Aorta (tissue), 5 donors: ENCODE measurements at regions of chr19 and their contacts with region 1.

Region 1: DNA sequence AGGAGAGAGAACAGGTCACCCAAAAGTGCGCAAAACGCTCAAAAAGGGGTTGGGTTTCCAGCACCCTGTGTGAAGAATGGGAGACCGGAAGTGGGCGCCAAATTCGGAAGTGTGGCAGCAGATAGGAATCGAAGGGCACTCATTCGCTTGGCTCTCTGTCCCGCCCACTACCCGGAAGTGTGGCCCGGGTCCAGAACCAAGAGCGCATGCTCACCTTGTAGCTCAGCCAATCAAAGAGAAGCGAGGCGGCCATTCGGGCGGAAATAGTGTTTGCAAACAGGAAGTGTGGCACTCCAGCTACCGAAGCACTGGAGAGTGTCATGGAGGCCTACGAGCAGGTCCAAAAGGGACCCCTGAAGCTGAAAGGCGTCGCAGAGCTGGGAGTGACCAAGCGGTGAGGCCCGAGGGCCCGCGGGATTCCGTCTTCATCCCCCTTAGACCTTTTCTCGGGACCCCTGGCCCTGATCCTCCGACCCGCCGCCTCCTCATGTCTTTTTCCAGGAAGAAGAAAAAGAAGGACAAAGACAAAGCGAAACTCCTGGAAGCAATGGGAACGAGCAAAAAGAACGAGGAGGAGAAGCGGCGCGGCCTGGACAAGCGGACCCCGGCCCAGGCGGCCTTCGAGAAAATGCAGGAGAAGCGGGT is at the start of gene FAM32A:
- DNase-seq: peak; percentile 99
- ATAC-seq: peak; percentile 98
- H3K4me3 ChIP-seq: peak within 1 kb of the TSS; percentile 76 to 99
- H3K27ac ChIP-seq: peak within 1 kb of the TSS in 1 of 2 donors; percentile 11
- H3K4me1 ChIP-seq: no peaks in the 10 kb centered on the region
- H3K27me3 ChIP-seq: no peaks in the 10 kb centered on the region
- total RNA-seq, gene FAM32A: 46.1 to 46.4 TPM

Region 2: GRCh38 chr19:15629003-15629880 is 556.0 kb before region 1 on chr19:
- intact Hi-C with region 1: loop called (anchors 2 to 5 kb)
- DNase-seq: peak; percentile 83 to 94
- ATAC-seq: peak; percentile 88
- H3K4me3 ChIP-seq: no peak overlapping the region
- H3K27ac ChIP-seq: no peak overlapping the region
- H3K4me1 ChIP-seq: no peaks in the 10 kb centered on the region
- H3K27me3 ChIP-seq: no peaks in the 10 kb centered on the region

Region 3: DNA sequence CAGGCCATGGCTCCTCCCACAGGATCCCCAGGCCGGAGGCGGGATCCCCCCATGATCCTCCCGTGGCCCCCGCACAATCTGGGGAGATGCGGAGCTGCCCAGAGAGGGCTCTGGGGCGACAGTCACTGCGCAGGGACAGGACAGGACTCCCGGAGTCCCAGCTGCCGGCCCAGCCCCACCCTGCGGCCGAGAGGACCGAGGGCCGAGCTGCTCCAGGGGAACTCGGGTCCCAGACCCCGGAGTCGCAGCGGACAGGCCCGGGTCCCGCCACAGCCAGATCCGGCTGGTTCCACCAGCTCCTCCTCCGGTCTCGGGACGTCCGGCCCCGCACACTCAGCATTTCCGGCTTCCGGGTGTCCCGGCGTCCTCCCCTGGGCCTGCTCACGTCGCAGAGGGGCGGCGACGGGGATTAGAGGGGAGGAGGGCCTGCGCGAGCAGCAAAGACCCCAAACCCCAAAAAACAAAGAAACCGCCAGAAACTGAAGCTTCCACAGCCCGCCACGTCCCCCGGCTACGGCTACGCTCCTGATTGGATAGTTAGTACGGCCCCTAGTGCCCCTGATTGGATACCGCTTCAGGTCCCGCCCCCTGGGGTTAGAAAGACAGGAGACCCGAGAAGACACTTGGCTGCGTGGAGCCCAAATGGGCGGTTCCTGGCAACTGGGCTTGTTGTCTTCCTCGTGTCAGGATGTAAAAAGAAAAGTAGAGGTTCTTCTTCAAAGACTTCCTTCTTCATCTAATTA is 348.5 kb before region 1 on chr19:
- intact Hi-C with region 1: loop called in 1 of 2 experiments (anchors 2 kb)
- DNase-seq: peak; percentile 97 to 98
- ATAC-seq: peak; percentile 99
- H3K4me3 ChIP-seq: peak overlapping the region; percentile 39 to 42
- H3K27ac ChIP-seq: peak overlapping the region; percentile 57 to 84
- H3K4me1 ChIP-seq: no peaks in the 10 kb centered on the region
- H3K27me3 ChIP-seq: no peaks in the 10 kb centered on the region

Region 4: GRCh38 chr19:16041299-16041990 is 143.8 kb before region 1 on chr19:
- intact Hi-C with region 1: loop called (anchors 1 to 2 kb)
- DNase-seq: peak; percentile 88 to 97
- ATAC-seq: peak; percentile 93
- H3K4me3 ChIP-seq: no peak overlapping the region
- H3K27ac ChIP-seq: peak overlapping the region in 1 of 2 donors; percentile 14
- H3K4me1 ChIP-seq: no peaks in the 10 kb centered on the region
- H3K27me3 ChIP-seq: no peaks in the 10 kb centered on the region

Region 5: DNA sequence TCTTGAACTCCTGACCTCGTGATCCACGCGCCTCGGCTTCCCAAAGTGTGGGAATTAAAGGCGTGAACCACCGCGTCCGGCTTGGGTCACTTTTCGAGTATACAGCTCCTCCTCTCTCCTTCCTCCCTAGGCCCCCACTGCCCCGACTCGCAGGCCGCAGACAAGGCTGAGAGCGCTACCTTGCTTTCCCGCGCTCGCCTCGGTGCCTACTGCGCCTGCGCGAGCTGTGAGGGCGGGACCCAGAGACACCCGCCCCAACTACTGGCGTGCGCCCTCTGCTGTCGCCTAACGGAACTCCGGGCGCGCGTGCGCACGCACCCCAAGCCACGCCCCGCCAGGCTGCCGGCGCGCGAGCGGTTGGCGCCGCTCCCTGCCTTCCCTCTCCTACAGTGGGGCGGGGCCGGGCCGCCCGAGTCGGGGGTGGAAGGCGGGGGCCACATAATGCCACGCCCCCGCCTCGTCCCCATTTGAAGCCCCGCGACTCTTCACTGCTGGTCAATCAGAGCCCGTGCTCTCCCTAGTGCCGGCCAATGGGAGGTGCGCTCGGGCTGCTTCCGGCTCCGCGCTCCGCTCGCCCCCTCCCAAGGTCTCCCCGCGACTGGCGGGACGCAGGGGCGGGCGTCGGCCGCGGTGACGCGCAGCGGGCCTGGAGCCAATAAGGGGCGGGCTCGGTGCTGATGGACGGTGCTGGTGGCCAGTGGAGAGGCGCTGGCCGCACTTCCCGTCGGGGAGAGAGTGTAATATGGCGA is 73.9 kb before region 1 on chr19 and contains the start of gene RAB8A:
- intact Hi-C with region 1: loop called (anchors 5 to 10 kb)
- DNase-seq: peak; percentile 99 to 100
- ATAC-seq: peak; percentile 98
- H3K4me3 ChIP-seq: peak within 1 kb of the TSS; percentile 48 to 94
- H3K27ac ChIP-seq: peak within 1 kb of the TSS in 1 of 2 donors; percentile 35
- H3K4me1 ChIP-seq: peaks cover 0 to 1% of the 10 kb centered on the region in 2 donors
- H3K27me3 ChIP-seq: no peaks in the 10 kb centered on the region
- total RNA-seq, gene RAB8A: 51.3 to 56.7 TPM

Region 6: DNA sequence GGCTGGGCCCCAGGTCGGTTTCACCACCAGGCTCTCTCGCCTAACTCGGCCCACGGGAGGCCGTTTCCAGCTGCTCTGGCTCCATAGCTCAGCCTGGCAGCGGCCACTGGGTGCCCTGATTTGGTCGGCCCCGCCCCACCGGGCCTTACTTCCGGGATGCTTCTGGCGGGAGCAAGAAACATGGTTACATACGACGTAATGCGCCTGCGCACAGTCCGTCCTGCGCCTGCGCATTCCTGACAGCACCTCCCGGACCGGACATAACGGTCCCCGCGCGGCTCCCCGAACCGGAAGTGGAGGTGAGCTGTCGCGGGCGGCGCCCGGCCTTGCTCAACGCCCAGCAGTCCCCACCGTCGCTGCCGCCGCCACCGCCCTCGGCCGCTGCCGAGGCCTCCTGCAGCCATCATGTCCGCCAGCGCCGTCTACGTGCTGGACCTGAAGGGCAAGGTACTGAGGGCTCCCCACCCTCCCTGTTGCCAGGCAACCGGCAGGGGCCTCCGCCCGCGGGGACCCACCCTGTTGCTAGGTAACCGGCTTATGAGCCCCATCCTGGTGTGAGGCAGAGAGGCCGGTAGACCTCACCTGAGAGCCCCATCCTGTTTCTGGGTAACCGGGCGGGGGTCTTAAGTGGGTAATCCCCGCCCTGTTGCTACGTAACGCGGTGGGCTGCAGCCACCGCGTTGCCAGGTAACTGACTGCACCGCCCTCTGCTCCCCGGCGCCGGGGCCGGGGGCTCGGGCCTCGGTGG is 12.6 kb after region 1 on chr19 and contains the start of gene AP1M1:
- intact Hi-C with region 1: loop called in 1 of 2 experiments (anchors 1 kb)
- DNase-seq: peak; percentile 99 to 100
- ATAC-seq: peak; percentile 95
- H3K4me3 ChIP-seq: peak within 1 kb of the TSS; percentile 55 to 90
- H3K27ac ChIP-seq: peak within 1 kb of the TSS in 1 of 2 donors; percentile 88
- H3K4me1 ChIP-seq: no peaks in the 10 kb centered on the region
- H3K27me3 ChIP-seq: no peaks in the 10 kb centered on the region
- total RNA-seq, gene AP1M1: 74.7 TPM

Region 7: DNA sequence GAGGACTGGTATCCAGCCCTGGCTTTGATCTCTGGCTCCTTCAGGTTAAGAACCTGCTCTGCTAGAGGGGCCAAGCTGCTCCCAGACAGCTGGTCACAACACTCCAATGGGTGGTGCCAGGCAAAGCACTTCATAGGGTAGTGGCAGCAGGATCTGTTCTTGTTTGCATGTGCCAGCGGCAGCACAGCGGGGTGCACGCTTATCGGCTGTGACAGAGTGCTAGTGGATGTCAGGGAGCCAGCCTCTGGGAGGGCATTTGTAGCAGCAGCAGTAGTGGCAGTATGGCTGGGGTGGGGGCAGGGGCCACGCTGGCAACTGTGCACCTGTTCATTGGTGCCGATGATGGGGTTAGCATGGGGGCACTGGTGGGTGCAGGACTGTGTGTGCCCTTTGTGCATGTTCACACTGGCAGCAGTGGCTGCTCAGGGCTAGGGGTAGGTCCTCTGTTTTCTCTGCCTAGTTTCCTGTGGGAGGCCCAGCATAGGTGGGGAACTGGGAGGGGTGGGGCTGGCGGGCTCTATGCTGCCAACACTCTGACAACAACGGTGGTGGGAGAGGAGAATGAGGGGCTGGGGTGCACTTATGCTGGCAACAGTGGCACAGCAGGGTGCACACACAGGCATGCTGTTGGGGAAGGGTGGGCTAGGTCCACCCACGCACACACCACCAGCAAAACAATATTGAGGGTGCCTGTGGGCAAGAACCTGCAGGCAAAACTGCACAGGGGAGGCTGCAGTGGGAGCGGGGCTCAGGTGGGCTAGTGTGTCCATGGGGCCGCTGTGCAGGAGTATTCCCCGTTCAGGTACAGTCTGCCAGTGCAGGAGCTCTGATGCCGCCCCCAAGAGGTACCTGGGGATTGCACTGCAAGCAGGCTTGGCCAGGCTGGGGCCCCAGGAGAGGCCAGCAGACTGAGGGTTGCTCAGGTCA is 31.8 kb after region 1 on chr19:
- intact Hi-C with region 1: no loop called
- DNase-seq: peak in 1 of 2 donors; percentile 61
- ATAC-seq: no peak
- H3K4me3 ChIP-seq: no peak overlapping the region
- H3K27ac ChIP-seq: no peak overlapping the region
- H3K4me1 ChIP-seq: no peaks in the 10 kb centered on the region
- H3K27me3 ChIP-seq: no peaks in the 10 kb centered on the region

Region 8: DNA sequence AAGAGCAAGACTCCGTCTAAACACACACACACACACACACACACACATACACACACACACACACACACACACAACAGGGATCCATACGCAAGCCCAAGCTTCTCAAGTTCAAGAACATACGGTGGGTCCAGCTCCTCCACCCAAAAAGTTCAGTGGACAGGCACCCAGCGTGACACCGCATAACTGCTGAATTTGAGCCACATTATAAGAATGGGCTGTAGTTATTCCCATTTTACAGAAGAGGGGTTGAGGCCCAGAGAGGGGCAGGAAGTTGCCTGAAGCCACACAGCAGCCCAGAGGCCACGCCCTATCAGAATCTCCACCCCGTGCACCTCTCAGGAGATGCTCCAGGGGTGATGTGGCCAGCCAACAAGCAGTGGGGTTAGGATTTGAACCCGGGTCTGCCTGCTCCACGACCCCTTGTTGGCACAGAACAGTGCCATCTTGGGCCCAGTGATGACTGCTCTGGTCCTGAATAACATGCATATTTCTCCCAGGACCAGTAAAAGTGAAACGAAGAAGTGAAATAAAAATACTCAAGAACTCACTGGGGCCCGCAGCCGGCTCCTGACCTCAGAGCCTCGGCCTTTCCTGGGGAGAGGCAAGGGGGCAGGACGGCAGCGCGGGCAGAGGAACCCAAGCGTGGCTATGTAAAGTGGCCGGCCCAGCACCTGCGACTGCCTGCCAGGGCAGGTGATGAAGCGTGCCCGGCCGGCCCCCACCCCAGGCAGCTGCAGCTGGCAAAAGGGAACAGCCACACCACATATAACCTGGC is 74.3 kb after region 1 on chr19:
- intact Hi-C with region 1: no loop called
- DNase-seq: no peak
- ATAC-seq: no peak
- H3K4me3 ChIP-seq: no peak overlapping the region
- H3K27ac ChIP-seq: no peak overlapping the region
- H3K4me1 ChIP-seq: no peaks in the 10 kb centered on the region
- H3K27me3 ChIP-seq: no peaks in the 10 kb centered on the region